ENCODE measurements at regions of chr3 and their contacts with region 1.

Region 1: DNA sequence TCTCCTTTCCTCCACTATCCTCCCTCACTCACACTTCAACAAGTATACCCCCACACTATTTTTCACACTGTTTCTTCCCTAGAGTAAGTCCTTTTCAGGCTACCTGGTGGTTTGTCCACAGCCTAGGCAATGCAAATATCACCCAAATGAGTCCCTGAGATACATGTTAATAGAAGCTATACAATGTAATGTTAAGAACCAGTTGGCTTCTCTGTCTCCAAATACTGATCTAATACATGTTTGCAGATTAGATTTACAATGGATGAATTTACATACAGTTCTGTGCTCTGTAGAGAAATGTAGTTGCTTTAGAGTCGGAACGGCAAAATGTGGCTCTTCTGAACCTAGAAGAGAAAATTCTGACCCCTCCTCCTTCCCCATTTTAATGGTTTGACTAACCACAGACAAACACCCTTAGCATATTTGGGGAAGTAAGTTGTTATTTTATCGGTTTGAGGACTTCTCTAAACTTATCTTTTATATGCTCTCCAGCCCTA is 63.6 kb upstream of the MBNL1 start:
- DNase-seq: peak in 4 of 14 experiments; percentile 18 to 71 (median 66)
- ATAC-seq: peak; percentile 45
- H3K4me3 ChIP-seq: peak overlapping the region; percentile 47
- H3K4me3 Mint-ChIP-seq: peak overlapping the region; percentile 93
- H3K27ac ChIP-seq: peak overlapping the region; percentile 58 to 66
- H3K27ac Mint-ChIP-seq: peak overlapping the region; percentile 96
- H3K4me1 ChIP-seq: peaks cover 28% of the 10 kb centered on the region
- H3K4me1 Mint-ChIP-seq: peaks cover 87% of the 10 kb centered on the region
- H3K27me3 ChIP-seq: no peaks in the 10 kb centered on the region
- H3K27me3 Mint-ChIP-seq: no peaks in the 10 kb centered on the region
- CTCF ChIP-seq: no peak

Region 2: GRCh38 chr3:152222327-152222726 is 17.2 kb after region 1 on chr3:
- CTCF ChIA-PET with region 1: interaction called, 3 read pairs
- POLR2A ChIA-PET with region 1: interaction called, 31 read pairs
- intact Hi-C with region 1: loop called in 1 of 2 experiments (anchors 2 kb)
- DNase-seq: no peak
- ATAC-seq: peak; percentile 51
- H3K4me3 ChIP-seq: no peak overlapping the region
- H3K4me3 Mint-ChIP-seq: peak overlapping the region; percentile 77
- H3K27ac ChIP-seq: no peak overlapping the region
- H3K27ac Mint-ChIP-seq: peak overlapping the region; percentile 83
- H3K4me1 ChIP-seq: peaks cover 14% of the 10 kb centered on the region
- H3K4me1 Mint-ChIP-seq: peaks cover 69% of the 10 kb centered on the region
- H3K27me3 ChIP-seq: no peaks in the 10 kb centered on the region
- H3K27me3 Mint-ChIP-seq: no peaks in the 10 kb centered on the region
- CTCF ChIP-seq: no peak

Region 3: DNA sequence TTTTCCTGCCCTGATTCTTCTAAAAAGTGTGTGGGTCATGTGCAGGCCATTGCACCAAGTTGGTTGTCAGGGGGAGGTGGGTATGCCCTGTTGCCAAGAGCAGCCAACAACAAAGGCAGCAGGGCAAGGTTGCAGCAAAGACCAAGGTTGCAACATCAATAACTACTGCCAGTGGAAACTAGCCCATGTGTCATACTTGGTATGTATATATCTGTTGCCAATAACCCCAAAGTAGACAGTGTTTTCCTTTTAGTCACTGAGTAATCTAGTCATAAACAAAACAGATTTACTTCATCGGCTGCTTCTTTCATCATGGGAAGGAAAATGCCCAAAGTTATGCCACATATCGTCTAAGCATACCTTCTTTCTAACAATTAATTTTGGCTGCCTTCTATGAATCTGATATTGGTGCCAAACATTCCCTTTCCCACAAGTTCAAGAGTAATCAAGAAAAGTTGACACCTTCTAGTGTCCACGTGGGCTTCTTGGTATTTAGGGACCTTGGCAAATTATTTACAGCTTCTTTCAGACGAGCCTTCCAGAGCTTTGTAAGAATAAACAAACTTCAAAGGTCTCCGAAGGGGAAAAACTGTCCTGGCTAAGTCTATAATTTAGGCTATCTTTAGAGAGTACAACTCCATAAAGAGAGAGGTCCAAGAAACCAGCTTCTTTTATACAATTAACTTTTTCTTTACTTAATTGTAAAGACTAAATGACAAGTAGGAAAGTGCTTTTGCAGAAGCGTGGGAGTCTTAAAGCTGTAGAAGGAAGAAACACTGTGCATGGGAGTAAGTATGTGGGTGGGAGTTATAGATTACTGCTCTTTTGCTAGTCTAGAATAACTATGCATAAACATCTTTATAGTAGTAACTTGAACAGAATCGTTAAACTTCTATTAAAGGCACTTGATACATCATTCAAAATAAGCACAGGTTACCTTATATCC is 53.6 kb after region 1 on chr3:
- CTCF ChIA-PET with region 1: interaction called, 5 read pairs
- POLR2A ChIA-PET with region 1: interaction called, 24 read pairs
- intact Hi-C with region 1: loop called in 1 of 2 experiments (anchors 5 kb)
- DNase-seq: peak in 12 of 14 experiments; percentile 35 to 90 (median 58)
- ATAC-seq: peak; percentile 65
- H3K4me3 ChIP-seq: peak overlapping the region; percentile 19
- H3K4me3 Mint-ChIP-seq: peak overlapping the region; percentile 86
- H3K27ac ChIP-seq: peak overlapping the region; percentile 81 to 86
- H3K27ac Mint-ChIP-seq: peak overlapping the region; percentile 96
- H3K4me1 ChIP-seq: peaks cover 57% of the 10 kb centered on the region
- H3K4me1 Mint-ChIP-seq: peaks cover 96% of the 10 kb centered on the region
- H3K27me3 ChIP-seq: no peaks in the 10 kb centered on the region
- H3K27me3 Mint-ChIP-seq: no peaks in the 10 kb centered on the region
- CTCF ChIP-seq: no peak

Region 4: GRCh38 chr3:152430223-152431002 is 225.3 kb after region 1 on chr3:
- CTCF ChIA-PET with region 1: no interaction called
- POLR2A ChIA-PET with region 1: no interaction called
- intact Hi-C with region 1: no loop called
- DNase-seq: no peak
- ATAC-seq: no peak
- H3K4me3 ChIP-seq: no peak overlapping the region
- H3K4me3 Mint-ChIP-seq: no peak overlapping the region
- H3K27ac ChIP-seq: no peak overlapping the region
- H3K27ac Mint-ChIP-seq: peak overlapping the region; percentile 81
- H3K4me1 ChIP-seq: peaks cover 5% of the 10 kb centered on the region
- H3K4me1 Mint-ChIP-seq: peaks cover 74% of the 10 kb centered on the region
- H3K27me3 ChIP-seq: no peaks in the 10 kb centered on the region
- H3K27me3 Mint-ChIP-seq: no peaks in the 10 kb centered on the region
- CTCF ChIP-seq: no peak